Cardiac septum (tissue), 1 donor: ENCODE measurements at regions of chr20 and their contacts with region 1.

Region 1: DNA sequence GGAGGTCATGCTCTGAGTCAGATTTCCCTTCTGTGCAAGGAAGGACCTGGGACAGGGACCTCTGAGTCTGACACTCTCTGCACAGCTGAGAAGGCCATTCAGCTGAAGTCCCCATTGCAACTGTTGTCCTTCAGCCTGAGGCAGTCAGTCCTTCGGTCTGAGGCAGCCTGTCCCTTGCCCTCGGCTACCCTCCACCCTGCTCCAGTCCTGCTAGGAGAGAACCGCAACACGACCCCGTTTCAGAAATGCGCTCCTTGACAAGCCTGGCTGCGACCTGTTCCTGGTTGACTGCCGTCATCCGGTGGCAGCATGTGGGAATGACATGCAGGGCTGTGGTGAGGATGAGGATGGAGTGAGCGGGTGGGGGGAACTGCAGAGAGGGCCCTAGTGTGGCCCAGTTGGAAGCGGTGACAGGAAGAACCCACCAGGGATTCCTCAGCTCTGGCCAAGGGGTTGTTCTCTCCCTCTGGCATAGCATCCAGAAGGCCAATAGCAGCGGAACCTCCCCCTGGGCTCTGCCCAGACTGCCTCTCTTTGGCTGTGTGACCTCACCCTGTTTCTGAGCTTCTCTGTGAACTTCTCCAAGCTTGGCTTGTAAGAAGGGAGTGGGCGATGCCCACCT is 40.3 kb upstream of the ANGPT4 start:
- DNase-seq: peak; percentile 84

Region 2: GRCh38 chr20:825710-826421 is 130.6 kb before region 1 on chr20:
- intact Hi-C with region 1: no loop called
- DNase-seq: no peak

Region 3: DNA sequence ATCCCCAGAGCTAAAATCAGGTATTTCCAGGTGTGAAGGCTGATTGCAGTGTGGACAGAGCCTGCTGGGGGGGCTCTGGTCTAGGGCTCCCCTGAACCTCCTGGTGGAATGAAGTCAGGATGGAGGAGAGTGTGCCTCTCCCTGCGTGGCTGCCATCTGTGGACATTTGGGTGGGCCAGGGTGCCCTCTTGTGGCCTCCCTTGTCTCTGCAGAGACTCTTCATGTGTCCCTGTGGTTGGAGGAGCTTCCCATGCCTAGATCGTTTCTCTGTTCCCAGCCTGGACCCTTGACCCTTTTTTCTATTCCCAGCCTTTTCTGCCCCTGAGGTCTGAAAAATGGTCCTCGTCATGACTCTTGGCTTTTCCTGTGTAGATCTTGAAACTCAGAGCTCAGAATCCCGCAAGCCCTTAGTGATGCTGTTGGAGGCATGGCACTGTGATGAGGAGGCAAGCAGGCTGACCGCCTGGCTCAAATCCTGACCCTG is 152.0 kb after region 1 on chr20:
- intact Hi-C with region 1: loop called (anchors 10 kb)
- DNase-seq: no peak

Region 4: DNA sequence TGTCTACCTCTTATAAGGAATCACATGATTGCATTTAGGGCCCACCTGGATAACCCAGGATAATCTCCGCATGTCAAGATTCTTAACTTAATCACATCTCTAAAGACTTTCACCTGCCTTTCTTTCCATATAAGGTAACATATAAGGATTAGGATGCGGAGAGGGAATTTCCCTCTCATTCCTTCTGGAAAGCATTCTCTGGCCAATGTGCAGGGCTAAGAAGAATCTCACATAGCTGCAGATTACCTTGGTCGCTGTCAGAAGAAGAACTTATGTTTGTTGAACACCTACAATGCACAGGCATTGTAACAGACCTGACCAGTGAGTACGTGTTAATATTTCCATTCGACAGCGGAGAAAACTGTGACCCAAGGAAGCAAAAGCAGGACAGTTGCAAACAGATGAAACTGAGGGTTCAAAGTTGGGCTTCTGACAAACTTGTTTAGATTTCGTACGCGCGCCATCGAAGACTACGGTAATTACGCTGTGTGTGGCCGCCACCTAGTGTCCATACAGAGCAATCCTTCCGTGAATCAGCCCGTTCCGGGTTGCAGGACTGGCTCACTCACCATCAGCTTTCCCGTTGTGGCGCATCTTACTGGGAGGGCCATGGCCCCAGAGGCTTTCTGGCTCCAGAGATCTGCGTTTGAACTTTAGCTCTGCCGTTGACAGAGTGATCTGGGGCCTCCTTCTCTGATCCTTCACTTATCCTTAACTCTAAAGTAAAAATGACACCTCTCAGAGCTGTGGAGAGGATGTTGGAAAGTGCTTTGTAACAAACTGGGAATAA is 256.4 kb after region 1 on chr20:
- intact Hi-C with region 1: loop called (anchors 10 kb)
- DNase-seq: peak; percentile 84